ENCODE measurements at regions of chr1 and their contacts with region 1.

Region 1: DNA sequence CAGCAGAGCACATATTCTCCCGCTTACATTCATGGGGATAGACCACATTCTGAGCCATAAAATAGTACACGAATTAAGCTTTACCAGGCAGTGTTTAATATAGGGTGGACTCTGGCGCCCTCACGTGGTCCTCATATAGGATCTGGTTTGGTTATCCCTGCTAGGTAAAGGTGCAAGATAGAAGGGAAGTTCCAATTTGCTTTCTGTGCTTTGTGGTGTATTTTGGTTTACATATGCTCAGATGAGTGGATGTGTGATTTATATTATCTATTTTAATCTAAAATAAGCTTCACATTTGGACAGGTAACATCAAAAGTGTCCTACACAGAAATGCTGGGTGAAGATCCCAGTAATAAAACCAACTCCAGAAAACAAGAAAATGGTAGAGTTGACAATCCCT is 3.6 kb downstream of the CR1 start:
- DNase-seq: peak; percentile 79
- ATAC-seq: peak; percentile 70
- H3K4me3 Mint-ChIP-seq: no peak overlapping the region
- H3K27ac Mint-ChIP-seq: no peak overlapping the region
- H3K4me1 Mint-ChIP-seq: peaks cover 15% of the 10 kb centered on the region
- H3K27me3 Mint-ChIP-seq: peaks cover 62% of the 10 kb centered on the region

Region 2: DNA sequence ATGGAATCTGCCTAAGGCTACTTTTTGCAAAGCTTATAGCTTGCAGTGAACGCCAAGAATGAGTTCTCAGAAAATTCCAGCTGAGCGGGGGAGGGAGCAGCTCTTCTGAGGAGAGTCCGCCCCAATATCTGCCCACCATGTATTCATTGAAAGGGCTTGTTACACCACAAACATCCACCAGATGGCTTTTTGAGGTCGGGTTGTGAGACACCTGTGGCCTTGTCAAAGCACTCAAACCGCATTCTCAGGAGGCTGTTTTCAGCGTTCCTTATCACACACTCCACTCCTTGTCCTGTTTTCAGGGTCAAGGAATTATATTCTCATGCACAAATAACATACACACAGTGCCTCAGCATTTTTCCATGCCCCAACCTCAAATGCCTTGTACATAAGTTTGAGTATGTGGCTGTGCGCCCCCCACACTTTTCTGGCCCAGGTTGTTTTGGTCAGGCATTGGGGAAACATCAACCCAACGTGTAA is 414.8 kb before region 1 on chr1:
- CTCF ChIA-PET with region 1: interaction called, 23 read pairs
- DNase-seq: peak; percentile 78
- ATAC-seq: peak; percentile 83
- H3K4me3 Mint-ChIP-seq: no peak overlapping the region
- H3K27ac Mint-ChIP-seq: no peak overlapping the region
- H3K4me1 Mint-ChIP-seq: peaks cover 21% of the 10 kb centered on the region
- H3K27me3 Mint-ChIP-seq: peaks cover 35% of the 10 kb centered on the region

Region 3: GRCh38 chr1:207454046-207454964 is 45.3 kb before region 1 on chr1 and contains the start of gene CR2:
- CTCF ChIA-PET with region 1: interaction called, 13 read pairs
- DNase-seq: peak; percentile 45
- ATAC-seq: peak; percentile 83
- H3K4me3 Mint-ChIP-seq: peak within 1 kb of the TSS; percentile 47
- H3K27ac Mint-ChIP-seq: no peak within 1 kb of the TSS
- H3K4me1 Mint-ChIP-seq: peaks cover 14% of the 10 kb centered on the region
- H3K27me3 Mint-ChIP-seq: peaks cover 56% of the 10 kb centered on the region
- total RNA-seq, gene CR2: not detected

Measured in activated CD8-positive, alpha-beta memory T cell treated with anti-CD3 and anti-CD28 coated beads, Interleukin-2, amount 10 ng/mL, durations not matched to agents 7 days and 5 days (primary cell).